ENCODE measurements at regions of chr6 and their contacts with region 1.

Region 1: GRCh38 chr6:27260369-27260768 is 12.9 kb downstream of the PRSS16 start:
- DNase-seq: no peak
- ATAC-seq: no peak
- H3K4me3 ChIP-seq: no peak overlapping the region
- H3K4me3 Mint-ChIP-seq: no peak overlapping the region
- H3K27ac ChIP-seq: no peak overlapping the region
- H3K27ac Mint-ChIP-seq: no peak overlapping the region
- H3K4me1 ChIP-seq: no peaks in the 10 kb centered on the region
- H3K4me1 Mint-ChIP-seq: no peaks in the 10 kb centered on the region
- H3K27me3 ChIP-seq: peaks cover 0 to 38% (median 29%) of the 10 kb centered on the region in 4 experiments
- H3K27me3 Mint-ChIP-seq: peaks cover 67% of the 10 kb centered on the region
- CTCF ChIP-seq: no peak

Region 2: DNA sequence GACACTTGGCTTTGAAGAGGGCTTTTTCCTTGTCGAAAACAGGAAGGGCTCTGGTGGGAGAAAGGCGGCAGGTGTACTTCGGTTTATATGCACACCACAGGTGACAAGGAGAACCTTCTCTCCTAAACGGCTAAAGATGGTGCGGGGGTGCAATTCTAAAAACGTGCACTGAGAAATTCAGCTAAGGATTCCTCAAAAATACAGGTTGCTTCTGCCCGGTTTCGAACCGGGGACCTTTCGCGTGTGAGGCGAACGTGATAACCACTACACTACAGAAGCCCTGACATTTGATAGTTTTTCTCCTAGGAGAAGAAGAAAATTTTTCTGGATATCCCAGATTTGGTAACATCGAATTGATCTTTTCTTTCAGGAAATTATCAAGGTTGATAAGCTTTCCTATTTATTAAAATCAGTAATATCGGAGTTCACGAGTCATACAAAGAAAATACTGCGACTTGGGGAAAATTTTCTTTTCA is 19.7 kb after region 1 on chr6:
- CTCF ChIA-PET with region 1: no interaction called
- POLR2A ChIA-PET with region 1: interaction called, 14 read pairs
- intact Hi-C with region 1: no loop called
- DNase-seq: no peak
- ATAC-seq: no peak
- H3K4me3 ChIP-seq: no peak overlapping the region
- H3K4me3 Mint-ChIP-seq: no peak overlapping the region
- H3K27ac ChIP-seq: no peak overlapping the region
- H3K27ac Mint-ChIP-seq: no peak overlapping the region
- H3K4me1 ChIP-seq: peaks cover 8 to 14% of the 10 kb centered on the region in 2 donors
- H3K4me1 Mint-ChIP-seq: no peaks in the 10 kb centered on the region
- H3K27me3 ChIP-seq: peaks cover 0 to 87% (median 73%) of the 10 kb centered on the region in 4 experiments
- H3K27me3 Mint-ChIP-seq: peaks cover 72% of the 10 kb centered on the region
- CTCF ChIP-seq: no peak

Region 3: DNA sequence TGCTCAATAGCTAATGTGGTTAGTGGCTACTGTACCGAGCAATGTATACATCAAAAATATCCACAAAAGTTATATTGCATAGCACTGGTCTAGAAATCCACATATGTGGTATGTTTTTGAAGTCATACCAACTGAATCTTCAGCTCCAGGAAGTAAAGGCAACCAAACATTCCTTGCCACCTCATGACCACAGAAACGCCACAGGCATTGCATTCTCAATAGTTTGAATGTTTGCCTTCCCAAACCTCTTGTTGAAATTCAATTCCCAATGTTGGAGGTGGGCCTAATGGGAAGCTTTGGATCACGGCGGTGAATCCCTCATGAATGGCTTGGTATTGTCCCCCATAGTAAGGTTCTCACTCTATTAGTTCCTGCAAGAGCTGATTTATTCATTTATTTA is 110.0 kb after region 1 on chr6:
- CTCF ChIA-PET with region 1: no interaction called
- POLR2A ChIA-PET with region 1: no interaction called
- intact Hi-C with region 1: no loop called
- DNase-seq: no peak
- ATAC-seq: no peak
- H3K4me3 ChIP-seq: no peak overlapping the region
- H3K4me3 Mint-ChIP-seq: no peak overlapping the region
- H3K27ac ChIP-seq: no peak overlapping the region
- H3K27ac Mint-ChIP-seq: no peak overlapping the region
- H3K4me1 ChIP-seq: peaks cover 5 to 14% of the 10 kb centered on the region in 2 donors
- H3K4me1 Mint-ChIP-seq: peaks cover 13% of the 10 kb centered on the region
- H3K27me3 ChIP-seq: peaks cover 0 to 13% (median 7%) of the 10 kb centered on the region in 4 experiments
- H3K27me3 Mint-ChIP-seq: peaks cover 32% of the 10 kb centered on the region
- CTCF ChIP-seq: no peak

Region 4: GRCh38 chr6:27472617-27473400 is 212.4 kb after region 1 on chr6 and contains the start of gene ZNF184:
- CTCF ChIA-PET with region 1: no interaction called
- POLR2A ChIA-PET with region 1: no interaction called
- intact Hi-C with region 1: no loop called
- DNase-seq: peak; percentile 96
- ATAC-seq: peak; percentile 92
- H3K4me3 ChIP-seq: peak within 1 kb of the TSS; percentile 75 to 93 (median 83)
- H3K4me3 Mint-ChIP-seq: peak within 1 kb of the TSS; percentile 100
- H3K27ac ChIP-seq: peak within 1 kb of the TSS; percentile 89 to 97
- H3K27ac Mint-ChIP-seq: peak within 1 kb of the TSS; percentile 99
- H3K4me1 ChIP-seq: peaks cover 16 to 22% of the 10 kb centered on the region in 2 donors
- H3K4me1 Mint-ChIP-seq: peaks cover 44% of the 10 kb centered on the region
- H3K27me3 ChIP-seq: no peaks in the 10 kb centered on the region
- H3K27me3 Mint-ChIP-seq: no peaks in the 10 kb centered on the region
- CTCF ChIP-seq: peak; percentile 31
- total RNA-seq, gene ZNF184: 11.8 TPM in 2 replicates